Left cardiac atrium (tissue), 4 donors: ENCODE measurements at regions of chr2 and their contacts with region 1.

Region 1: GRCh38 chr2:203498161-203498560 is 36.9 kb downstream of the RAPH1 start:
- DNase-seq: no peak
- ATAC-seq: peak in 1 of 2 donors; percentile 79

Region 2: DNA sequence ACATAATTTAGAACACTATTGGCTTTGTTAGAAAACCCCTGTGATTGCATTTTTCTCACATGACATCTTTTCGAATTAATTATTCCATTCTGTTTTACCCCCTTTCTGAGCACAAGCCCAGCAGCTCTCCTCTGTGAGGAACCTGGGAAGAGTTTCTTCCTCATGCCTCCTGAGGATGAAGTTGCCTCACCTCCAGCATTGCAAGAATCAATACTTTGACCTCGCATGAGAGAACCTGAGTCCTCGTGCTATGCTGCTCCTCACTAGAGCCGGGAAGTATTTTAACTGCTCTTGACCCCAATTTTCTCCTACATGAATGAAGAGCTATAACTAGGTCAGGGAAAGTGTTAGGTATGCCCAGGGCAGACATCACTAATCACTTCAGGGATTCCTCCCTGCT is 114.1 kb after region 1 on chr2:
- intact Hi-C with region 1: no loop called
- DNase-seq: no peak
- ATAC-seq: no peak

Region 3: DNA sequence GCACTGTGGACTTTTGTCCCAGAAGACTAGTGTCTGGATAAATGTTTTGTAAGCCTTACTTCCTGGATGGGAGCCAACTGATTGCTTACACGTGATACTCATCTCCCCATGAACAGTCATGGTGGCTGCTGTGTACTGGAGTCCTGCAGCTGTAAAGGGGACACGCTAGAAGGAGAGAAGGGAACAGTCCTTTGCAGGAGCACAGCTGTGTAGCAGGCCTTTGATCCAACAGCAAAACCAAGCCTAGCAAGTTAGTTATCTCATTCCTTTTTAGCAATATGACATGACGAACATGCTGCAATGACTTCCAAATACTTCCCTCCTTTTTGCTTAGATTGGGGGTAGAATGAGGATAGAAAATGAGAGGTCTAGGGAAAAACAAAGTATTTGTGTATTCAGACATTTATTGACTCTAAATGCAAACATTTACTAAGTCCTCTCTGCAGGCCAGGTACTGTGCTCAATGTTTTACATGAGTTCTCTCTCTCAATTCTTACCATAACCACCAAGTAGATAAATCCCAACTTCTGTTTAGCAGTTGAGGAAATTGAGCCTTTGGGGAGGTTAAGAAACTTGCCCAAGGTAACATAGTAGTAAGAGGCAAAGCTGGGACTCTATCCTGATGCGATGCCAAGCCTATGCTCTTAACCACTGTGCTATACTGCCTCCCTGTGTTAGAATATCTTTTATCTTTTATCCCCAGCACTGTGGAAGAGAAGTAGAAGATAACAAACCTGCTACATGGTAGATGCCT is 152.9 kb after region 1 on chr2:
- intact Hi-C with region 1: loop called in 1 of 2 experiments (anchors 10 kb)
- DNase-seq: no peak
- ATAC-seq: peak; percentile 72 to 79

Region 4: GRCh38 chr2:203669820-203670219 is 171.7 kb after region 1 on chr2:
- intact Hi-C with region 1: no loop called
- DNase-seq: no peak
- ATAC-seq: no peak